CD4-positive, alpha-beta T cell (primary cell): ENCODE measurements at regions of chr3 and their contacts with region 1.

Region 1: GRCh38 chr3:194486540-194487288 is at the start of gene ATP13A3:
- DNase-seq: peak; percentile 78 to 97 (median 90)
- ATAC-seq: peak; percentile 83
- H3K4me3 ChIP-seq: peak within 1 kb of the TSS; percentile 81
- H3K4me3 Mint-ChIP-seq: peak within 1 kb of the TSS; percentile 97
- H3K27ac ChIP-seq: peak within 1 kb of the TSS; percentile 66 to 76
- H3K27ac Mint-ChIP-seq: peak within 1 kb of the TSS; percentile 89
- H3K4me1 ChIP-seq: peaks cover 34% of the 10 kb centered on the region
- H3K4me1 Mint-ChIP-seq: peaks cover 44% of the 10 kb centered on the region
- H3K27me3 ChIP-seq: no peaks in the 10 kb centered on the region
- H3K27me3 Mint-ChIP-seq: no peaks in the 10 kb centered on the region
- CTCF ChIP-seq: no peak
- total RNA-seq, gene ATP13A3: 46.5 to 52.7 TPM

Region 2: DNA sequence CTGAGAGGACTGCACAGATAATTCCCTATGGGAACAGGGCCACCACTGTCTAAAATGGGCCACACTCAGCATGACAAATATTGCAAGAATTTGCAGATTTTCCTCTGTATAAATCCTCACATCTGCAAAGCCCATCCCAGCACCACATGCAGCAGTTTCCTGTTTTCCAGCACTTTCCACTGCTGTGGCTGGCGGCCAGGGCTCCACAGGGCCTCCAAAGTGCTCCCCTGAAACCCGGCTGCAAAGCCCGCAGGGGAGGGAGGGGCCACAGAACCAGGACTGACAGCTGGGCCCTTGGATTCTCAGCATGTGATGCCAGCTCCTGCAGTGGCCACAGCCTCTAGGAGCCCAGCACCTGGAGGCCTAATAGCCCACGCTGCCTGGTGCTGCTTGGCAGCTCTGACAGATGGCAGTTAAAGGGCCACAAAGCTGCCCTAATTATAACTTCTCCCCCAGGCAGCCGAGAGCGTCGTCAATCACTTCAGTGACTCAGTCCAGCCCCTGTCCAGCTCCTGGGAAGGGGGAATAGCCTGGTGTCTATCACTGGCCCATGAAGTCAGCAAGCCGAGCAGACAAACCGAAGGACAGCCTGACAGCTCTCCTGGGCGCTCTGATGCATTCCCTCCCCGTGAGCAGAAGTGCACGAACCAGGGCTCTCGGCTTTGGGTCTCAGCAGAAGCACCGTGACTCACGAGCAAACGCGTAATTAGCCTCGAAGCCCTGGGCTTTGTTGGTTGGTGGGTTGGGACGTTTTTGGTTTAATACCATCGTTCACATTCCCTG is 121.9 kb before region 1 on chr3:
- CTCF ChIA-PET with region 1: no interaction called
- POLR2A ChIA-PET with region 1: no interaction called
- intact Hi-C with region 1: no loop called
- DNase-seq: no peak
- ATAC-seq: no peak
- H3K4me3 ChIP-seq: no peak overlapping the region
- H3K4me3 Mint-ChIP-seq: no peak overlapping the region
- H3K27ac ChIP-seq: no peak overlapping the region
- H3K27ac Mint-ChIP-seq: no peak overlapping the region
- H3K4me1 ChIP-seq: no peaks in the 10 kb centered on the region
- H3K4me1 Mint-ChIP-seq: no peaks in the 10 kb centered on the region
- H3K27me3 ChIP-seq: peaks cover 0 to 20% of the 10 kb centered on the region in 2 experiments
- H3K27me3 Mint-ChIP-seq: peaks cover 23% of the 10 kb centered on the region
- CTCF ChIP-seq: no peak

Region 3: DNA sequence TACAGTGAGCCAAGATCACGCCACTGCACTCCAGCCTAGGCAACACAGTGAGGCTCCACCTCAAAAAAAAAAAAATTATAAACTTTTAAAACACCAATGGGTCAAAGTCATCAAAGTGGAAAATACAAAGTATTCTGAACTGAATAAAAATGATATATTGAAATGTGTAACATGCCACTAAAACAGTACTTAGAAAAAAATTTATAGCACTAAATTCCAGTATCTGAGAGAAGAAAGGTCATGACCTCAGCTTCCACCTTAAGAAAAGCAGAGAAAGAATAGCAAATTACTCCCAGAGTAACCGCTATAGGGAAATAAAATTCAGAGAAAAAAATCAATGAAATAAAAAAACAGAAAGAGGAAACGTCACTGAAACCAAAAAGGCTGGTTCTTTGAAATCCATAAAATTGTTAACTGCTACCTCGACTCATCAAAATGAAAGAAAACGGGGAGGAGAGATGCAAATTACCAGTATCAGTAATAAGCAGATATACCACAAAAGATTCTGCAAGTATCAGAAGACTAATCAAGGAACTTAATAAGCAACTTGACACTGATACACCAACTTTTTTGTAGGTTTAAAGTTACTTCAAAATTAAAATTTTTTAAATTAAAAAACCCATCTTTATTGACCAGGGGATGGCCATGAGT is 20.7 kb before region 1 on chr3:
- CTCF ChIA-PET with region 1: no interaction called
- POLR2A ChIA-PET with region 1: no interaction called
- intact Hi-C with region 1: no loop called
- DNase-seq: no peak
- ATAC-seq: no peak
- H3K4me3 ChIP-seq: no peak overlapping the region
- H3K4me3 Mint-ChIP-seq: no peak overlapping the region
- H3K27ac ChIP-seq: no peak overlapping the region
- H3K27ac Mint-ChIP-seq: no peak overlapping the region
- H3K4me1 ChIP-seq: peaks cover 9% of the 10 kb centered on the region
- H3K4me1 Mint-ChIP-seq: peaks cover 14% of the 10 kb centered on the region
- H3K27me3 ChIP-seq: no peaks in the 10 kb centered on the region
- H3K27me3 Mint-ChIP-seq: no peaks in the 10 kb centered on the region
- CTCF ChIP-seq: no peak

Region 4: DNA sequence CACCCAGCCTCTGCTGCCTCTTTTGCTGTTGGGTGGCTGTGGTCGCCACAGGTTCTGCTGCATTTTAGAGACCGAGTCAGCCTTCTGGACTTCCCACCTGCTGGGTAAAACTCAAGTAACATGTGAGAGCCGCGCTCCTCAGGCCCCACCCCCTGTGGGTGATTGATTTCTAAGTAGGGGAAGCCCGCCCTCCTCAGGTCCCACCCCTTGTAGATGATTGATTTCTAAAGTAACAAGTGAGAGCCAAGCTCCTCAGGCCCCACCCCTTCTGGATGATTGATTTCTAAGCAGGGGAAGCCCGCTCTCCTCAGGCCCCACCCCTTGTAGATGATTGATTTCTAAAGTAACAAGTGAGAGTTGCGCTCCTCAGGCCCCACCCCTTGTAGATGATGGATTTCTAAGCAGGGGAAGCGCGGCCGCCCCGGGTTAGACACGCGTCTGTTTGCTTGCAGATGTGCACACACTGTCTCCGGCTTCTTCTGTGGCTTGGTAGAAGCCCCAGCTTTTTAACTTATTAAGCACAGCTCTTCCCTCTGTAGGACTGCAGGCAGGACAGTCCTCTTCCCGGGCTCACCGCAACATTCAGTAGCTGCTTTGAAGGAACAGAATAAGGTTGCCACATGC is 282.4 kb after region 1 on chr3:
- CTCF ChIA-PET with region 1: no interaction called
- POLR2A ChIA-PET with region 1: interaction called, 3 read pairs
- intact Hi-C with region 1: loop called (anchors 5 kb)
- DNase-seq: peak; percentile 77 to 98 (median 88)
- ATAC-seq: peak; percentile 97
- H3K4me3 ChIP-seq: peak overlapping the region; percentile 43
- H3K4me3 Mint-ChIP-seq: peak overlapping the region; percentile 87
- H3K27ac ChIP-seq: peak overlapping the region; percentile 51 to 65
- H3K27ac Mint-ChIP-seq: peak overlapping the region; percentile 84
- H3K4me1 ChIP-seq: peaks cover 16% of the 10 kb centered on the region
- H3K4me1 Mint-ChIP-seq: peaks cover 22% of the 10 kb centered on the region
- H3K27me3 ChIP-seq: no peaks in the 10 kb centered on the region
- H3K27me3 Mint-ChIP-seq: peaks cover 5% of the 10 kb centered on the region
- CTCF ChIP-seq: no peak